CD4-positive, alpha-beta memory T cell (primary cell): ENCODE measurements at regions of chr3 and their contacts with region 1.

Region 1: GRCh38 chr3:38521391-38521987 is 25.3 kb downstream of the EXOG start:
- DNase-seq: peak; percentile 54 to 63 (median 61)
- H3K4me3 ChIP-seq: no peak overlapping the region
- H3K4me3 Mint-ChIP-seq: peak overlapping the region in 3 of 8 donors; percentile 3 to 75 (median 41)
- H3K27ac ChIP-seq: no peak overlapping the region
- H3K27ac Mint-ChIP-seq: peak overlapping the region in 6 of 7 donors; percentile 43 to 87 (median 62)
- H3K4me1 ChIP-seq: peaks cover 31% of the 10 kb centered on the region
- H3K4me1 Mint-ChIP-seq: peaks cover 27 to 36% (median 33%) of the 10 kb centered on the region in 4 donors
- H3K27me3 ChIP-seq: no peaks in the 10 kb centered on the region
- H3K27me3 Mint-ChIP-seq: no peaks in the 10 kb centered on the region

Region 2: GRCh38 chr3:38487323-38487722 is 34.2 kb before region 1 on chr3:
- CTCF ChIA-PET with region 1: interaction called, 25 read pairs
- POLR2A ChIA-PET with region 1: no interaction called
- intact Hi-C with region 1: no loop called
- DNase-seq: no peak
- H3K4me3 ChIP-seq: no peak overlapping the region
- H3K4me3 Mint-ChIP-seq: no peak overlapping the region
- H3K27ac ChIP-seq: no peak overlapping the region
- H3K27ac Mint-ChIP-seq: peak overlapping the region in 1 of 7 donors; percentile 68
- H3K4me1 ChIP-seq: no peaks in the 10 kb centered on the region
- H3K4me1 Mint-ChIP-seq: peaks cover 0 to 2% (median 0%) of the 10 kb centered on the region in 4 donors
- H3K27me3 ChIP-seq: no peaks in the 10 kb centered on the region
- H3K27me3 Mint-ChIP-seq: no peaks in the 10 kb centered on the region

Region 3: GRCh38 chr3:38533285-38533976 is 11.9 kb after region 1 on chr3:
- CTCF ChIA-PET with region 1: interaction called, 19 read pairs
- POLR2A ChIA-PET with region 1: interaction called, 3 read pairs
- intact Hi-C with region 1: no loop called
- DNase-seq: no peak
- H3K4me3 ChIP-seq: no peak overlapping the region
- H3K4me3 Mint-ChIP-seq: no peak overlapping the region
- H3K27ac ChIP-seq: no peak overlapping the region
- H3K27ac Mint-ChIP-seq: peak overlapping the region in 2 of 7 donors; percentile 43 to 83
- H3K4me1 ChIP-seq: no peaks in the 10 kb centered on the region
- H3K4me1 Mint-ChIP-seq: no peaks in the 10 kb centered on the region
- H3K27me3 ChIP-seq: no peaks in the 10 kb centered on the region
- H3K27me3 Mint-ChIP-seq: no peaks in the 10 kb centered on the region

Region 4: DNA sequence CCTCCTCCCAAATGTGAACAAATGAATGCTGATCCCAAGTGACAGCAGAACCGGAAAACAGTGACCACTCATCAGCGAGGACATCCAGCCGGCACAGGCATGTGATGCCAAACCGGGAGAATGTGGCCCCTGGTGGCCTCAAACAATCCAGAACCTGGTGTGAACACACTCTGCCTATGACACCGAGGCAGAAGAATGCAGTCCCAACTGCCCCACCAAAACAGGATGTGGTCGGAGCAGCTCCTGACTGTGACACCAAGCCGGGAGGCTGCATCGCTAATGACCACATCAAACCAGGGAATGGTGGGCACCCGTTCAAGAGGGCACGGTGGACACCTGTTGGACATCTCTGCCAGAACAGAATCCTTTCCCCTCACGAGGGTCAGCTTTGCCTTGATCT is 112.6 kb after region 1 on chr3:
- CTCF ChIA-PET with region 1: interaction called, 10 read pairs
- POLR2A ChIA-PET with region 1: no interaction called
- intact Hi-C with region 1: no loop called
- DNase-seq: no peak
- H3K4me3 ChIP-seq: no peak overlapping the region
- H3K4me3 Mint-ChIP-seq: no peak overlapping the region
- H3K27ac ChIP-seq: no peak overlapping the region
- H3K27ac Mint-ChIP-seq: peak overlapping the region in 2 of 7 donors; percentile 9 to 35
- H3K4me1 ChIP-seq: no peaks in the 10 kb centered on the region
- H3K4me1 Mint-ChIP-seq: peaks cover 0 to 6% (median under 1%) of the 10 kb centered on the region in 4 donors
- H3K27me3 ChIP-seq: no peaks in the 10 kb centered on the region
- H3K27me3 Mint-ChIP-seq: peaks cover 0 to 4% of the 10 kb centered on the region in 2 donors

Region 5: DNA sequence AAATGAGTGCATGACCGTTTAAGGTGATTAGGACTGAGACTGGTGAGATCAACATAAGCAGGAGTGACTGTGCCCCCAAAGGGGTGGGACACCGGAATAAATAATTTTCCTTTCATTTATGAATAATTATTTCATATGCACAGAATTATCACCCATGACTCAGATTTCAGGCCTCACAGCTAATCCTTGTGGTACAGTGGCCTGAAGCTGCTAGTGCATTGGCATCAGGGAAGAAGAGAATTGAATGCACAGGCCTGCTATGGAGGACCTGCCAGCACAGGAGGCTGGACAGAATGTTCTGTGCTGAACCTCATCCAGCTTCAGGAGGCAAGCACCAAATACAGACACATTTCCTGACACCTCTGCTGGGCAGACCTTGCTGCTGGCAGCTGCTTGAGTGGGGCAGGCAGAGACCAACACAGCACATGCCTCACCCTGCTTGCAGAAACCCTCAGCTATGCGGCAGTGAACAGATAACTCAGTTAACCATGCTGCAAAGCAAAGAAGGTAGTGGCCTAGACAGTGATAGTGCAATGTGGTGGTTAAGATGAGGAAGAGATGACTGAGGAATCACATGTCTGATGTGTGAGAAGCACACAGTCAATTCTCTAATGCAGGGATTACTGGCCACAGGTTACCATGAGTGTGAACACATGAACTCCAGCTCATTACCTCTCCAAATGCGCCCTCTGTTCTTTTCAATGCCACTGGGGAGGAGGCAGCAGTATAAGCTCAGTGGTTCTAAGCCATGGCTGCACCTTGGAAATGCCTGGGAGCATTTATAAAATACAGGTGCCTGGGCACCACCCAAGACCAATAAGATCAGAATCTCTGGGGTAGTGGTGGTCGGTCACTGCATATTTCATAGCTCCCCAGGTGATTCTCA is 196.1 kb after region 1 on chr3:
- CTCF ChIA-PET with region 1: no interaction called
- POLR2A ChIA-PET with region 1: no interaction called
- intact Hi-C with region 1: no loop called
- DNase-seq: no peak
- H3K4me3 ChIP-seq: no peak overlapping the region
- H3K4me3 Mint-ChIP-seq: no peak overlapping the region
- H3K27ac ChIP-seq: no peak overlapping the region
- H3K27ac Mint-ChIP-seq: no peak overlapping the region
- H3K4me1 ChIP-seq: no peaks in the 10 kb centered on the region
- H3K4me1 Mint-ChIP-seq: peaks cover 0 to 4% (median under 1%) of the 10 kb centered on the region in 4 donors
- H3K27me3 ChIP-seq: no peaks in the 10 kb centered on the region
- H3K27me3 Mint-ChIP-seq: peaks cover 5 to 6% of the 10 kb centered on the region in 2 donors

Region 6: GRCh38 chr3:39000008-39000450 is 478.5 kb after region 1 on chr3:
- CTCF ChIA-PET with region 1: interaction called, 36 read pairs
- POLR2A ChIA-PET with region 1: no interaction called
- intact Hi-C with region 1: no loop called
- DNase-seq: peak in 4 of 5 donors; percentile 26 to 34 (median 28)
- H3K4me3 ChIP-seq: no peak overlapping the region
- H3K4me3 Mint-ChIP-seq: no peak overlapping the region
- H3K27ac ChIP-seq: no peak overlapping the region
- H3K27ac Mint-ChIP-seq: no peak overlapping the region
- H3K4me1 ChIP-seq: no peaks in the 10 kb centered on the region
- H3K4me1 Mint-ChIP-seq: no peaks in the 10 kb centered on the region
- H3K27me3 ChIP-seq: no peaks in the 10 kb centered on the region
- H3K27me3 Mint-ChIP-seq: peaks cover 5 to 10% of the 10 kb centered on the region in 2 donors